Endothelial cell of umbilical vein (primary cell): ENCODE measurements at regions of chr7 and their contacts with region 1.

Region 1: DNA sequence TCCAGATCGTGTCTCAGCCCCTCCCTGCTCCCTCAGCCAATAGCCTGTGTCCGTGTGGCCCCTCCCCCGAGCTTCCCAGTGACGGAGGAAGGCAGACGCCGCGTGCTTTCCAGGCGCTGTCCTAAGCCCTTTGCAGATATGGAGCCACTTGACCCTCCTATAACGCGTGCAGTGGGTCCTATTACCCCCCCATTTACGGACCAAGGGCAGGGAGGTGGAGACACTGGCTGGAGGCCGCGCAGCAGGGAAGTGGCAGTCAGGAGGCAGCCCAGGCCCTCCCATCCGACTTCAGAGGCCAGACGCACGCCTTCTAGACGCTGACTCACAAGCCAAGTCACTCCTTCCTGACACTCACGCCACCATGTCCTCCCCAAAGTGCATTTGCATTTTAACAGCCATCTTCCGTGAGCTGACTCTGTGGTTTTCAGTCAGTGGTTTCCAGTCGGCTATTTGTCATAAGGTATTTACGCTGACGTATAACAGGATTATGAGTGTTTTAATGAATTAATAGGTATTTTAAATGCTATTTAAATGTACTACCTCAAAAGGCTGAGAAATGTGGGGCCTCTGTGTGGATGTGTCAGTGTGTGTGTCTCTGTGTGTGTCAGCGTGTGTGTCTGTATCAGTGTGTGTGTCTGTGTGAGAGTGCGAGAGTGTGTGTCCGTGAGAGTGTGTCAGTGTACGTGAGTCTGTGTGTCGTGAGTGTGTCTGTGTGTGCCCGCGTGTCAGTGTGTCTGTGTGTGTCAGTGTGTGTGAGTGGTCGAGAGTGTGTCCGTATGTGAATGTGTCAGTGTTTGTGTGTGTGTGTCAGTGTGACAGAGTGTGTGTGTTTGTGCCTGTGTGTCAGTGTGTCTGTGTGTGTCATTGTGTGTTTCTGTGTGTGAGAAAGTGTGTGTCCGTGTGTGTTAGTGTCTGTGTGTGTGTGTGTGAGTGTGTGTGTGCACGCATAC is 92.0 kb upstream of the INSIG1 start:
- DNase-seq: peak; percentile 97
- H3K4me3 ChIP-seq: peak overlapping the region; percentile 25 to 78 (median 51)
- H3K27ac ChIP-seq: peak overlapping the region; percentile 99
- H3K4me1 ChIP-seq: peaks cover 29% of the 10 kb centered on the region
- H3K27me3 ChIP-seq: no peaks in the 10 kb centered on the region
- CTCF ChIP-seq: no peak
- POLR2A ChIP-seq: peak; percentile 67

Region 2: DNA sequence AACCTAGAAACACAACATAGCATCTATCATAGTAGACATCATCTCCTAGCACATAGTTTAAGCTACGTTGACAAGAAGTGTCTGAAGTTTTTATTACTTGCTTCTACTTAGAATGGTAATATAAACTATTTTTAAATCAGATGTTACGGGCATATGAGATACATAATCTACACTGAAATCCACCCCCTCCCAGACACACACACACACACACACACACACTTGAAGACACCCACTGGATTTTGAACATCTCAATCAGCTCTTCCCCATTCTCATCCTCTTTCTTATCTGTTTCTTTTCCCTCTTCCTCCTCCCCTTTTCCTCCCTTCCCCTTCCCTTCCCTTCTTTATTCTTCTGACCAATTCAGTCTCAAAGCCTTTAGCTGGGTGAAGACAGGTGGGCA is 378.6 kb before region 1 on chr7:
- CTCF ChIA-PET with region 1: no interaction called
- POLR2A ChIA-PET with region 1: no interaction called
- dilution Hi-C with region 1: no loop called
- intact Hi-C with region 1: no loop called
- DNase-seq: no peak
- H3K4me3 ChIP-seq: no peak overlapping the region
- H3K27ac ChIP-seq: no peak overlapping the region
- H3K4me1 ChIP-seq: no peaks in the 10 kb centered on the region
- H3K27me3 ChIP-seq: no peaks in the 10 kb centered on the region
- CTCF ChIP-seq: no peak
- POLR2A ChIP-seq: no peak

Region 3: DNA sequence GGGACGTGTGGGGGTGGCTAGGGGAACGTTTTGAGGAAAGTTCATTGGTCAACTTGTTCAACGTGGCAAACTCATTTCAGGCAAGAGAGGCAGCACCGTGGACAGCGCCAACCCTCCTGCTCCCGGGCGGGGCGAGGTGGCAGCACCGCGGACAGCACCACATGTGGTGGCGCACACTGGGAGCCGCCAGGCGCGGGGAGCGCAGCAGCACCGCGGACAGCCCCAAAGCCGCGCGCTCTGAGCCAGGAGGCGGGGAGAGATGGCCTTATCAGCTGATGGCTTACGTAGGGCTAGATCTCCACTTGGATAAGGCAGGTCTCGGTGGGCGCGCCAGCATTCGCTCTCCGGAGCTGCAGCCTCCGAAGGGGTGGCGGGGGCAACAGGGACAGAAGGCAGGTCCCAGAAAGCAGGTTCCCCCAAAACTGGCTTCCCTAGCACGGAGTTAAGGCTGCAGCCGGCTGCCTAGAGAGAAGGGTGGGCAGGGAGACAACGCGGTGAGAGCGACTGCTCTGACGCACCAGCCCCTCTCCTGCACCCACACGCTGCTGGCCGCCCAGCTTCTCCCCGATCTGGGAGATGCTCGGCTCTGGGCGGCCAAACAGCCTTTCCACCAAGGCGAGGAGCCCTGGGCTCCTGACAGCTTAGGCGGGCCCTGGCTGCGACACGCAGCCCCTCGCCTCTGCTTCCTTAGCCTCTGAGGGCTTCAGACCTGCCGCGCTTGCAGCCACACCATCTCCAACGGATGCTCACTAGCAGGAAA is 135.5 kb before region 1 on chr7 and contains the start of gene HTR5A:
- CTCF ChIA-PET with region 1: no interaction called
- POLR2A ChIA-PET with region 1: no interaction called
- dilution Hi-C with region 1: no loop called
- intact Hi-C with region 1: loop called (anchors 1 kb)
- DNase-seq: peak; percentile 85
- H3K4me3 ChIP-seq: no peak within 1 kb of the TSS
- H3K27ac ChIP-seq: no peak within 1 kb of the TSS
- H3K4me1 ChIP-seq: no peaks in the 10 kb centered on the region
- H3K27me3 ChIP-seq: no peaks in the 10 kb centered on the region
- CTCF ChIP-seq: no peak
- POLR2A ChIP-seq: no peak
- total RNA-seq, gene HTR5A: not detected in 2 replicates

Region 4: GRCh38 chr7:155190688-155191087 is 15.0 kb before region 1 on chr7:
- CTCF ChIA-PET with region 1: interaction called, 10 read pairs
- POLR2A ChIA-PET with region 1: no interaction called
- dilution Hi-C with region 1: no loop called
- intact Hi-C with region 1: loop called (anchors 1 kb)
- DNase-seq: peak; percentile 20
- H3K4me3 ChIP-seq: no peak overlapping the region
- H3K27ac ChIP-seq: no peak overlapping the region
- H3K4me1 ChIP-seq: no peaks in the 10 kb centered on the region
- H3K27me3 ChIP-seq: peaks cover under 1 to 6% of the 10 kb centered on the region in 2 experiments
- CTCF ChIP-seq: peak; percentile 83 to 94
- POLR2A ChIP-seq: no peak

Region 5: GRCh38 chr7:155257482-155258225 is 52.0 kb after region 1 on chr7:
- CTCF ChIA-PET with region 1: interaction called, 4 read pairs
- POLR2A ChIA-PET with region 1: interaction called, 6 read pairs
- dilution Hi-C with region 1: no loop called
- intact Hi-C with region 1: loop called (anchors 1 kb)
- DNase-seq: peak; percentile 73
- H3K4me3 ChIP-seq: no peak overlapping the region
- H3K27ac ChIP-seq: no peak overlapping the region
- H3K4me1 ChIP-seq: peaks cover 12% of the 10 kb centered on the region
- H3K27me3 ChIP-seq: no peaks in the 10 kb centered on the region
- CTCF ChIP-seq: no peak
- POLR2A ChIP-seq: no peak

Region 6: GRCh38 chr7:155298834-155299534 is 93.3 kb after region 1 on chr7:
- CTCF ChIA-PET with region 1: interaction called, 17 read pairs
- POLR2A ChIA-PET with region 1: interaction called, 36 read pairs
- dilution Hi-C with region 1: no loop called
- intact Hi-C with region 1: loop called (anchors 1 kb)
- DNase-seq: peak; percentile 96
- H3K4me3 ChIP-seq: peak overlapping the region; percentile 50 to 99 (median 91)
- H3K27ac ChIP-seq: peak overlapping the region; percentile 64
- H3K4me1 ChIP-seq: peaks cover 31% of the 10 kb centered on the region
- H3K27me3 ChIP-seq: no peaks in the 10 kb centered on the region
- CTCF ChIP-seq: no peak
- POLR2A ChIP-seq: peak; percentile 52

Region 7: DNA sequence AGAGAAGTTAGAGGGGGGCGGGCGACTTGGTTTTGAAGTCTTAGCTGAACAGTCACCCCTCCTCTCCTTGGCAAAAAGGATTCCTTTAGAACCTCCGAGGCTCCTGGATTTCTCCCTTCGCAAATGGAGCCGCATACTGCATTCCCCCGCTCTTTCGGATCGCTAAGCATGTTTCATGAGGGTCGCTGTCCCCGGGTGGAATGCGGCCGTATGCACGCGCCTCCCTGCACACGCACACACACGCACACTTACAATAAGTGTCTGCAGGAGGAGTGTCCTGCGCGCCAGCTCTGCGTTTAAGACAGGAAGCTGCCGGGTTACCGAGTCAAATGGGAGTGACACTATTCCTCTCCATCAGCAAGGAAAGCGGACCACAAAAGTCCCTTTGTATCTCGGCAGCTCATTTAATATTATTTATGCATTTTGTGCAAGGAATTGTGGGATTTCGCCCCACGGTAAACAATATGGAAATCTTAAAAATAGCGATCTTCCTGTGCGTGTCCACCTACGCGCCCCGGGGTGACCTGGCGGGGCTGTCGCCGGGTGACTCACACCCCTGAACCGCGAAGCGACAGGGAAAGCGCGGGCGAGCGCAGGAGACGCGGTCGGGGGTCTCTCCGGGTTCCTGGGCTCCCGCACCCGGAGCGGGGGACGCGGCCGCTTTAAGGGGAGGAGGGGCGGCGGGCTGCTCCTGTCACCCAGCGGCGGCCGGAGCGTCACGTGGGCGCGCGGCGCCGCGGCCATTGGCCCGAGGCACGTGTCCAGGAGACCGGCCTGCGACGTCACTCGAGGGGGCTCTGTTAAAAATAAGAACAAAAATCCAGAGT is 251.3 kb after region 1 on chr7:
- CTCF ChIA-PET with region 1: no interaction called
- POLR2A ChIA-PET with region 1: no interaction called
- dilution Hi-C with region 1: no loop called
- intact Hi-C with region 1: loop called (anchors 5 kb)
- DNase-seq: peak; percentile 49
- H3K4me3 ChIP-seq: peak overlapping the region in 2 of 3 experiments; percentile 27 to 34
- H3K27ac ChIP-seq: no peak overlapping the region
- H3K4me1 ChIP-seq: no peaks in the 10 kb centered on the region
- H3K27me3 ChIP-seq: peaks cover 78 to 94% of the 10 kb centered on the region in 2 experiments
- CTCF ChIP-seq: no peak
- POLR2A ChIP-seq: no peak

Region 8: GRCh38 chr7:155804897-155805825 is 599.5 kb after region 1 on chr7:
- CTCF ChIA-PET with region 1: no interaction called
- POLR2A ChIA-PET with region 1: no interaction called
- dilution Hi-C with region 1: no loop called
- intact Hi-C with region 1: loop called (anchors 10 kb)
- DNase-seq: peak; percentile 69
- H3K4me3 ChIP-seq: peak overlapping the region; percentile 12 to 56 (median 31)
- H3K27ac ChIP-seq: no peak overlapping the region
- H3K4me1 ChIP-seq: peaks cover 29% of the 10 kb centered on the region
- H3K27me3 ChIP-seq: peaks cover 14 to 58% of the 10 kb centered on the region in 2 experiments
- CTCF ChIP-seq: peak; percentile 50 to 80
- POLR2A ChIP-seq: no peak